ENCODE measurements at regions of chr21 and their contacts with region 1.

Region 1: DNA sequence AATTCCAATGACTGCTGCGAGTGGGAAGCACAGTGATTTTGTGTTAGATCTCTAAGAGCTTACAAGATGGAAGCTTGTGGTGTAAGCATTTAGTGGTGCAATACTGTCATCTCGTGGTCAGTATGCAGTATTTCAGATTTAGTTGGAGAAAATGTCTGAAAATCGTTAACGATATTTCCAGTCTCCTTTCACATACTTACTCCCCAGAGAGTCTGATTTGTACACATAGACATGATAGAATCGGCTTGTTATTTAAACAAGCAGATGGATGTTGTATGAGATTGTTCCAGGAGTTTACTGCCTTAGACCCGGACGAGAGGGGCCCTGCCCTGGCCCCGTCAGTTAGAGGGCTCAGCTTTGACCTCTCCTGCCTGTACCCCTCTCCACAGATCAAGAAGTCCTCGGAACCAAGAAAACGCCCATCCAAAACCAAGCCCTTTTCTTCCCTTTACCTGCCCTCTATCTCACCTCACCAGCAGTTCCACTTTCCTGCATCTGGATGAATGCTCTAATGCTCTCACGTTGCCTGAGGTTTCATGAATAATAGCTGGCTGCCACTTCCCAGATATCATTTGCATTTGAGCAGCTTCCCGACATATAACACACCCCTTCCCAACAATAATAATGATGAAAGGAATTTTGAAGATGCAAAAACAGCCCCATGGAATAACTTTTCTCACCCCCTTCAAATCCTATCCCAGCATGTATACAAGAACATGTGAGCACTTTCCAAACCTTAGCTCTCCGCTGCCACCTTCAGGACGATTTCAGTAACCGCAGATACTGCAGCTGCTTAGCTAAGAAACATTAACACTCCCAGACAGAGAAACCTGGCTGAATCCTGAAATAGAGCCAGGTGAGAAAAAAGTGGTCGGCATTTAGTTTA is 247.3 kb downstream of the LTN1 start:
- DNase-seq: peak; percentile 51 to 87
- ATAC-seq: peak; percentile 86 to 89 (median 87)
- H3K4me3 ChIP-seq: peak overlapping the region; percentile 24
- H3K4me3 Mint-ChIP-seq: no peak overlapping the region
- H3K27ac ChIP-seq: no peak overlapping the region
- H3K27ac Mint-ChIP-seq: no peak overlapping the region
- H3K4me1 ChIP-seq: peaks cover 5% of the 10 kb centered on the region
- H3K4me1 Mint-ChIP-seq: peaks cover 11 to 24% of the 10 kb centered on the region in 2 donors
- H3K27me3 ChIP-seq: no peaks in the 10 kb centered on the region
- H3K27me3 Mint-ChIP-seq: no peaks in the 10 kb centered on the region
- CTCF ChIP-seq: peak; percentile 83

Region 2: DNA sequence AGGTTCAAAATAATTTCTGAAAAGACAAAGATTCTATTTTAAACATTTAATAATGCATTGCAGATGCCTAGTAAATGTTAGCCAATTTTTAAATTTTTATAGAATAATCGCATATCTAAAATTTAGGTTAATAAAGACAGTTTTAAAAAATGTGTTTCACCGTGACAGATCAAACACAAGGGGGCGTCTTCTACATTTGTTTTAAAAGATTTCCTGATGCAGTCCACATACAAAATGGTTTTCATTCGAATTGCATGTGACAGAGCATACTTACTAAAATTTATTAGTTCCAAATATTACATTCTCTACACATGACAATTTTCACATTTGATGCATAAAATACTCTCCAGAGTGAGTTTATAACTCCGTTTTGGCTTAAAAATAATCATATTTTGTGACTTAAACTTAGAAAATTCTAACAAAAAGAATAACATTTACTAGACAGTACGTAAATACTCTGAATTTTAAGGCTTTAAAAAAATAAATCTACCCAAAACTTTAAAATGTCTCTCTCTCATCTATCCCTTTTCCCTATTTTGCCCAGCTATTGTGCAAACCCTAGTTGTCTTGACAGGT is 1975.7 kb before region 1 on chr21:
- intact Hi-C with region 1: loop called (anchors 2 kb)
- DNase-seq: peak in 1 of 2 donors; percentile 20
- ATAC-seq: no peak
- H3K4me3 ChIP-seq: no peak overlapping the region
- H3K4me3 Mint-ChIP-seq: no peak overlapping the region
- H3K27ac ChIP-seq: no peak overlapping the region
- H3K27ac Mint-ChIP-seq: no peak overlapping the region
- H3K4me1 ChIP-seq: no peaks in the 10 kb centered on the region
- H3K4me1 Mint-ChIP-seq: no peaks in the 10 kb centered on the region
- H3K27me3 ChIP-seq: no peaks in the 10 kb centered on the region
- H3K27me3 Mint-ChIP-seq: no peaks in the 10 kb centered on the region
- CTCF ChIP-seq: peak; percentile 67

Region 3: GRCh38 chr21:27700974-27701614 is 1044.3 kb before region 1 on chr21:
- intact Hi-C with region 1: loop called (anchors 2 kb)
- DNase-seq: peak; percentile 64 to 66
- ATAC-seq: peak; percentile 72 to 91 (median 85)
- H3K4me3 ChIP-seq: no peak overlapping the region
- H3K4me3 Mint-ChIP-seq: no peak overlapping the region
- H3K27ac ChIP-seq: no peak overlapping the region
- H3K27ac Mint-ChIP-seq: no peak overlapping the region
- H3K4me1 ChIP-seq: no peaks in the 10 kb centered on the region
- H3K4me1 Mint-ChIP-seq: no peaks in the 10 kb centered on the region
- H3K27me3 ChIP-seq: no peaks in the 10 kb centered on the region
- H3K27me3 Mint-ChIP-seq: peaks cover 0 to 16% of the 10 kb centered on the region in 2 donors
- CTCF ChIP-seq: peak; percentile 80

Region 4: GRCh38 chr21:28445081-28445830 is 300.1 kb before region 1 on chr21:
- intact Hi-C with region 1: no loop called
- DNase-seq: no peak
- ATAC-seq: no peak
- H3K4me3 ChIP-seq: no peak overlapping the region
- H3K4me3 Mint-ChIP-seq: no peak overlapping the region
- H3K27ac ChIP-seq: no peak overlapping the region
- H3K27ac Mint-ChIP-seq: no peak overlapping the region
- H3K4me1 ChIP-seq: no peaks in the 10 kb centered on the region
- H3K4me1 Mint-ChIP-seq: no peaks in the 10 kb centered on the region
- H3K27me3 ChIP-seq: no peaks in the 10 kb centered on the region
- H3K27me3 Mint-ChIP-seq: no peaks in the 10 kb centered on the region
- CTCF ChIP-seq: no peak

Region 5: DNA sequence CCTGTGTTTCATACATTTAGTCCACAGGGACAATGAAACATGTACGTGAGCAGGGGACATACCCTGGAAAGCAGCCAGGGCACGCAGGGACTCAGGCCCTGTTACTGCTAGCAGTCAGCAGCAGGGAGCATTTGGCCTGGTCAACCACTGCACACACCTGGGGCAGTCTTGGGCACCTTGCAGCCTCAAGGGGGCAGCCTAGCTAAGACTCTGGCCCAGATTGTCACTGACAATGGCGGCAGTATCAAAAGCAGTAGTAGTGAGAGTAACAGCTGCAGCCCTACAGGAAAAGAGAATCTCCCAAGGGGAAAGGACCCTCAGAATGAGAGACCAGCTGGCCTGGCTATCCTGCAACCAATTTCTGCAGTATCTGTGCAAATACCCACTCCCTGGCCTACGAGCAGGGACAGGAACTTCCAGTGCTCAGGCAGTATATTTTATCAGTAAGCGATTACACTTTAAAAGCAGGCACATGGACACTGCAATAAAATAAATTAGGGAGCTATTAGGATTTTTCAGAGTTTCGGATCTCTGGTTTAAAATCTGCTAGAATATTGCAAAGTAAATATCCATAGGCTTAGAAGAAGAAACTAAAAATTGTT is 228.3 kb before region 1 on chr21:
- intact Hi-C with region 1: loop called (anchors 1 kb)
- DNase-seq: peak; percentile 39 to 76
- ATAC-seq: peak; percentile 78 to 80 (median 79)
- H3K4me3 ChIP-seq: no peak overlapping the region
- H3K4me3 Mint-ChIP-seq: no peak overlapping the region
- H3K27ac ChIP-seq: no peak overlapping the region
- H3K27ac Mint-ChIP-seq: no peak overlapping the region
- H3K4me1 ChIP-seq: peaks cover 5% of the 10 kb centered on the region
- H3K4me1 Mint-ChIP-seq: peaks cover 13 to 24% of the 10 kb centered on the region in 2 donors
- H3K27me3 ChIP-seq: no peaks in the 10 kb centered on the region
- H3K27me3 Mint-ChIP-seq: no peaks in the 10 kb centered on the region
- CTCF ChIP-seq: peak; percentile 62

Region 6: DNA sequence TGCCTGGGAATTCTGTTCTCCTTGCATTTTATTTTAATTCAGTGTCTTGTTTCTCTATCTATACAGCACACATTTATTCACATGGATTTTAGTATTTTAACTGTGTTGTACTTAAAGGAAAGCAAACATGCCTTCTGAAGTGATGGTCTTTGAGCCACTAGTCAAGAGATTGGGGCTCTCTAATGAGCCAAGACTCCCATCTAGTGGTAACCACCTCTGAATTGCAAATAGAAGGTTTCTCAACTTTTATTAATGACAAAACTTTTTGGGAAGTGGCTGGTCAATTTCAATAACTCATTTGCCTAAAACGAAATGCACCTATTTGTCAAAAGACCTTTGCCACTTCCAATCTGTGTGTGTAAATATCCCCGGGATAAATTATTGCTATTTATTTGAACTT is 47.7 kb after region 1 on chr21:
- intact Hi-C with region 1: loop called (anchors 1 kb)
- DNase-seq: peak in 1 of 2 donors; percentile 31
- ATAC-seq: peak; percentile 63 to 79 (median 69)
- H3K4me3 ChIP-seq: no peak overlapping the region
- H3K4me3 Mint-ChIP-seq: peak overlapping the region; percentile 43
- H3K27ac ChIP-seq: no peak overlapping the region
- H3K27ac Mint-ChIP-seq: peak overlapping the region; percentile 42 to 61
- H3K4me1 ChIP-seq: peaks cover 14% of the 10 kb centered on the region
- H3K4me1 Mint-ChIP-seq: peaks cover 54% of the 10 kb centered on the region in 2 donors
- H3K27me3 ChIP-seq: no peaks in the 10 kb centered on the region
- H3K27me3 Mint-ChIP-seq: no peaks in the 10 kb centered on the region
- CTCF ChIP-seq: peak; percentile 71

Region 7: GRCh38 chr21:28944296-28944695 is 198.9 kb after region 1 on chr21:
- intact Hi-C with region 1: loop called (anchors 1 kb)
- DNase-seq: no peak
- ATAC-seq: no peak
- H3K4me3 ChIP-seq: no peak overlapping the region
- H3K4me3 Mint-ChIP-seq: no peak overlapping the region
- H3K27ac ChIP-seq: no peak overlapping the region
- H3K27ac Mint-ChIP-seq: peak overlapping the region in 1 of 2 donors; percentile 14
- H3K4me1 ChIP-seq: no peaks in the 10 kb centered on the region
- H3K4me1 Mint-ChIP-seq: no peaks in the 10 kb centered on the region
- H3K27me3 ChIP-seq: no peaks in the 10 kb centered on the region
- H3K27me3 Mint-ChIP-seq: no peaks in the 10 kb centered on the region
- CTCF ChIP-seq: no peak

Measured in natural killer cell (primary cell).